ENCODE measurements at regions of chr17 and their contacts with region 1.

Region 1: GRCh38 chr17:45021607-45022287 is 29.7 kb downstream of the DCAKD start:
- DNase-seq: peak; percentile 76
- H3K4me3 ChIP-seq: no peak overlapping the region
- H3K27ac ChIP-seq: no peak overlapping the region
- H3K4me1 ChIP-seq: peaks cover 14% of the 10 kb centered on the region
- CTCF ChIP-seq: peak; percentile 87

Region 2: GRCh38 chr17:44804302-44805089 is 217.3 kb before region 1 on chr17:
- CTCF ChIA-PET with region 1: no interaction called
- POLR2A ChIA-PET with region 1: no interaction called
- intact Hi-C with region 1: no loop called
- DNase-seq: no peak
- H3K4me3 ChIP-seq: no peak overlapping the region
- H3K27ac ChIP-seq: no peak overlapping the region
- H3K4me1 ChIP-seq: no peaks in the 10 kb centered on the region
- CTCF ChIP-seq: no peak

Region 3: DNA sequence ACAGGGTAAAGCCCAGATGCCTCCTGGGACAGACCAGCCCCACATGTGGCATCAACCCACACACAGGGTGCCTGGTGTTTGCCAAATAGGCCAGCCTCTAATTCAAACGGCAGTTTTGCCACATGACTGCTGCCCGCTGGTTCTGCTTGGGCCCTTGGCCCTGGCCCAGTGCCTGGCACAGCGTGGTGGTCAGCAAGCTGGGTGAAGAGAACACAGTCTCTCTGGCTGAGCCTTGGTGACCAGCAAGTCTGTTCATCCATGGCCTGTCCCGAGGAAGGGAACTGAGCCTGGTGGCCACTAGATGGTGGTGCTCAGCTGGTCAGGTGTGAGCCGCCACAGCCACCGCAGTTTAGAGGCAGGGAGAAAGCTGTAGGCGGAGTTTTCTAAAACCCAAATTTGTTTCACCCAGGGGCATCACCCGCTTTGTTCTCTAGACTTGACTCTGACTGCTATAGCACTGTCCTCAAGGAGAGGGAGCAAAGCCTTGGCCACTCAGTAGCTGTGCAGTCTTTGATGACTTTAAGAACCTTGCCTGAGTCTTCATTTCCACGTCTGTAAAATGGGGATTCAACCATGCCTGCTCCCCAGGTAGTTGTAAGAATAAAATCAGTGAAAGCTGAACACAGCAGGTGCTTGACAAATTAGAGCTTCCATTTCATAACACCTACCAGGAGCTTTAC is 101.7 kb before region 1 on chr17:
- CTCF ChIA-PET with region 1: interaction called, 3 read pairs
- POLR2A ChIA-PET with region 1: no interaction called
- intact Hi-C with region 1: loop called (anchors 1 kb)
- DNase-seq: peak; percentile 79
- H3K4me3 ChIP-seq: no peak overlapping the region
- H3K27ac ChIP-seq: no peak overlapping the region
- H3K4me1 ChIP-seq: peaks cover 23% of the 10 kb centered on the region
- CTCF ChIP-seq: peak; percentile 84

Region 4: DNA sequence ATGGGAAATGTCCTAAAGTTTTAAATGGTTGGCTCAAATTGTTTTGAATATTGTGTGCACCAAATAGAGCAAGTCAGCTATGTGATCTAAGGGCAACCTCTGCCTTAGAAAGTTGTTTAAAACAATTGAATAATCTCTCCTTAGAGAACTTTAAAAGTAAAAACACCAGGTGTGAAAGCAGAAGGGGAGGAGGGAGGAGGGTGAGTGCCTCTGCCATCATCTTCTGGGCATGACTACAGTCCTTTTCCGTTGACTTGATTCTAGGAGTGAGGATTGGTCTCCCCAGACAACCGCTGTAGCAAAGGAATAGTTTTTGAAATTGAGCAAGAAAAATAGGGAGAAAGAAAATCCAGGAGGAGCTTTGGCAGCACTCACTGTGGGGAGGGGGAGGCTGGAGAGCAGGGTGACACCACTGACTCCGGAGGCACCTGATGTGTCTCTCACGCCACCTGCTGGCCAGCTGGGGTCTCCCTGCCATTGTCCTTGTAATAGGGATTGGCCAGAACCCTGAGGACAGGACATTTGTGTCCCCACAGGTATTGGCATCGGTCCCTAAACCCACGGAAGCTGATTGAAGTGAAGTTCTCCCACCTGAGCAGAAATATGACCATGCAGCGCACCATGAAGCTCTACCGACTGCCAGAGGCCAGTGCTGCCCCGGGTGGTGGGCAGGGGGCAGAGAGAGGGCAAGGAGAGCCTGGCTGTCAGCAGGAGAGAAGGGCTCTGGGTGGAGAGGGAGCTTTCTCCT is 77.3 kb after region 1 on chr17:
- CTCF ChIA-PET with region 1: no interaction called
- POLR2A ChIA-PET with region 1: no interaction called
- intact Hi-C with region 1: loop called (anchors 5 kb)
- DNase-seq: peak; percentile 78
- H3K4me3 ChIP-seq: no peak overlapping the region
- H3K27ac ChIP-seq: no peak overlapping the region
- H3K4me1 ChIP-seq: no peaks in the 10 kb centered on the region
- CTCF ChIP-seq: peak; percentile 94